Activated B cell treated with CpG ODN at 0.5 μM for 24 hours (primary cell): ENCODE measurements at regions of chr6 and their contacts with region 1.

Region 1: GRCh38 chr6:118709859-118710350 is 58.5 kb upstream of the CEP85L start:
- DNase-seq: no peak
- ATAC-seq: peak; percentile 92
- H3K4me3 Mint-ChIP-seq: peak overlapping the region; percentile 95
- H3K27ac Mint-ChIP-seq: peak overlapping the region; percentile 98
- H3K4me1 Mint-ChIP-seq: peaks cover 62% of the 10 kb centered on the region
- H3K27me3 Mint-ChIP-seq: no peaks in the 10 kb centered on the region
- CTCF ChIP-seq: no peak

Region 2: GRCh38 chr6:118551063-118552053 is 158.5 kb before region 1 on chr6:
- CTCF ChIA-PET with region 1: no interaction called
- POLR2A ChIA-PET with region 1: no interaction called
- intact Hi-C with region 1: no loop called
- DNase-seq: no peak
- ATAC-seq: peak; percentile 57
- H3K4me3 Mint-ChIP-seq: no peak overlapping the region
- H3K27ac Mint-ChIP-seq: no peak overlapping the region
- H3K4me1 Mint-ChIP-seq: no peaks in the 10 kb centered on the region
- H3K27me3 Mint-ChIP-seq: no peaks in the 10 kb centered on the region
- CTCF ChIP-seq: no peak

Region 3: DNA sequence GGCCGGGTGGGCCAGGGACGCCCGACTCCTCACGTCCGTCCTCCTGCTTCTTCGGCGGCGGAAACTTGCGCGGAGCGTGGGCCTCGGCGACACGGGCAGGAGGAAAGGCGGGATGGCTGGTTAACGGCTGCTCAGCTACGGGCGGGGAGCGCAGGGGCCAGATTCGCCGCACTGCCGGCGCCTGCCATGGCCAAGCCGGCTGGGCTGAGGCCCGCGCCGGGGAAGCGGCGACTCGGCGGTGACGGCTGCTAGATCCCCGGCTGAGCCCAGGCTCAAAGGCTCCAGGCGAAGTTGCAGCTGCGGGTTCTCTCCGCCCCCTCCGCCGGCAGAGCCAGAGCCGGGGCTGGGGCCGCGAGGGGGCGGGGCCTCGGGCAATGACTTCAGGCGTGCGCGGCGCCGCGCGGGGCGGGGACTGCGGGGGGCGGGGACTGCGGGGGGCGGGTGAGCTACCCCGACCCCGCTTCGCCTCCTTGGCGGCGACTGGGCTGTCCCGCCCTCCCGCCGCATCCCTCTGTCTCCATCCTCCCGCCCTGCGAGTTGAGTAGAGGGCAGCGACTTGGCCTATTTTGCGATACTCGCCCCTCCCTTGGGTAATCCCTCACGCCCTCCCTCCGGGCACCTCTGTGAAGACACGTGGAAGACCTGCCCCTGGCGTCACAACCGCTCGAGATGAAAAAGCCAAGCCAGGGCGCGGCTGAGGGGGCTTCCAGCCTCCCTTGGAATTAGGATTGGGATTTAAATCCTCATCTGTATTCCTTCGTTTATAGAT is 58.4 kb before region 1 on chr6 and contains the start of gene CEP85L:
- CTCF ChIA-PET with region 1: interaction called, 3 read pairs
- POLR2A ChIA-PET with region 1: interaction called, 46 read pairs
- intact Hi-C with region 1: loop called (anchors 1 kb)
- DNase-seq: peak; percentile 85
- ATAC-seq: peak; percentile 91
- H3K4me3 Mint-ChIP-seq: peak within 1 kb of the TSS; percentile 98
- H3K27ac Mint-ChIP-seq: peak within 1 kb of the TSS; percentile 93
- H3K4me1 Mint-ChIP-seq: peaks cover 22% of the 10 kb centered on the region
- H3K27me3 Mint-ChIP-seq: no peaks in the 10 kb centered on the region
- CTCF ChIP-seq: no peak
- total RNA-seq, gene CEP85L: 14.6 and 21.8 TPM in 2 replicates

Region 4: GRCh38 chr6:118674775-118675174 is 35.1 kb before region 1 on chr6:
- CTCF ChIA-PET with region 1: no interaction called
- POLR2A ChIA-PET with region 1: interaction called, 10 read pairs
- intact Hi-C with region 1: no loop called
- DNase-seq: no peak
- ATAC-seq: no peak
- H3K4me3 Mint-ChIP-seq: no peak overlapping the region
- H3K27ac Mint-ChIP-seq: no peak overlapping the region
- H3K4me1 Mint-ChIP-seq: peaks cover 17% of the 10 kb centered on the region
- H3K27me3 Mint-ChIP-seq: no peaks in the 10 kb centered on the region
- CTCF ChIP-seq: no peak

Region 5: DNA sequence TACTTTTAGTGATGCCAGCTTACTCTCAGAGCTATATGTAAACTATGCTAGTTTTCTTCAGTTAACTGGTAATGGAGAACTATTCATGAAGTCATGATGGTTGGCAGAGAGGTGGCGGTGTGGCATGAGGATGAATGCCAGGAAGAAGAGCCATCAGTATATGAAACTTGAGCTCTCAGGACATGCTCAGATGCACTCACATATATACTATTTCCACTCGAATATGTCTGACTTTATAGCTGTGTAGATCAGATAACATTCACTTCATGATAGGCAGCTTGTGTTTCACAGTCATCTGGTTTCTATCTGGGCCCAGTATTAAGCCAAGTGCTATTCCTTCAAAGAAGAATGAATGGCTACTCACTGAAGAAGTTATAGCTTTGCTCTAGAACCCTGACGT is 12.4 kb before region 1 on chr6:
- CTCF ChIA-PET with region 1: interaction called, 5 read pairs
- POLR2A ChIA-PET with region 1: interaction called, 9 read pairs
- intact Hi-C with region 1: loop called (anchors 1 kb)
- DNase-seq: no peak
- ATAC-seq: no peak
- H3K4me3 Mint-ChIP-seq: no peak overlapping the region
- H3K27ac Mint-ChIP-seq: no peak overlapping the region
- H3K4me1 Mint-ChIP-seq: peaks cover 55% of the 10 kb centered on the region
- H3K27me3 Mint-ChIP-seq: no peaks in the 10 kb centered on the region
- CTCF ChIP-seq: no peak

Region 6: GRCh38 chr6:118724211-118724610 is 14.3 kb after region 1 on chr6:
- CTCF ChIA-PET with region 1: interaction called, 18 read pairs
- POLR2A ChIA-PET with region 1: interaction called, 58 read pairs
- intact Hi-C with region 1: loop called (anchors 1 kb)
- DNase-seq: no peak
- ATAC-seq: peak; percentile 74
- H3K4me3 Mint-ChIP-seq: peak overlapping the region; percentile 55
- H3K27ac Mint-ChIP-seq: peak overlapping the region; percentile 80
- H3K4me1 Mint-ChIP-seq: peaks cover 64% of the 10 kb centered on the region
- H3K27me3 Mint-ChIP-seq: no peaks in the 10 kb centered on the region
- CTCF ChIP-seq: no peak

Region 7: DNA sequence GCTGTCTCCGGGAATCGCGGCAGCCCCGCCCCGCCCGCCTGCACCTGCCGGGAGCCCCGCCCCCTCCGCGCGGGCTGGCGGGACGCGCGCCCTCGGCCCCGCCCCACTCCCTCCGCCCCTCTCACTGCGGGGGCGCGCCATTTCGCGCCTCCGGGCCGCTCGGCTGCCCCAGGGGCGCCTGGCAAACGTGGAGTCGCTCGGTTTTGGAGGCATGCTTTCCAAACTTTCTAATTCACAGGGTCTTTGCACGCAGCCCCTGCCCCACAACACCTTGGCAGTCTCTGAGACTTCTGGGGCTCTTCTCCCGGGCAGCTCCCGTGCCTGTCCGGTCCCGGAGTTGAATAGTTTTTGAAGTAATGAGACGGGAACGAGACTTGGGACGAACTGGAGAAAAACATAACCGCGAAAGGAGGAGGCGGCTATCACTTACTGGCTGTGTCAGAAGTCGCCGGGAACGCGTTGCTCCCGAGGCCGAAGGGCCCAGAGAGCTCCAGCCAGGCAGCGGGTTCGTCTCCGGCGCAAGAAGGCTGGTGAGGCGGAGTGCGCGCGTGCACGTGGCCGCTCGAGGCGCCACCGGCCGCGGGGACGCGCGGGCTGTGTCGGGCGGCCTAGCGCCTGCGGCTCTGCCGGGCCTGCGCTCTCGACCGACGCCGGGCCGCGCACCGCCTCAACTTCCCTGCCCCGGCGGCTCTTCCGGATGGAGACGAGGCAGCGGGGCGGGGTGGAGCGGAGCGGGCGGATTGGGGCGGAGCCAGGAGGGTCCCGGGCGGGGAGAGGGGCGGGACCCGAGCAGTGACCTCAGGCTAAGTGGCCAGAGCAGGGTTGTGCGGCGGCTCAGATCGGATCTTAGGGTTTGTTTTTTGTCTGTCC is 224.8 kb after region 1 on chr6 and contains the start of gene MCM9:
- CTCF ChIA-PET with region 1: no interaction called
- POLR2A ChIA-PET with region 1: no interaction called
- intact Hi-C with region 1: loop called (anchors 5 kb)
- DNase-seq: peak; percentile 90
- ATAC-seq: peak; percentile 92
- H3K4me3 Mint-ChIP-seq: peak within 1 kb of the TSS; percentile 89
- H3K27ac Mint-ChIP-seq: peak within 1 kb of the TSS; percentile 91
- H3K4me1 Mint-ChIP-seq: peaks cover 32% of the 10 kb centered on the region
- H3K27me3 Mint-ChIP-seq: no peaks in the 10 kb centered on the region
- CTCF ChIP-seq: no peak
- total RNA-seq, gene MCM9: 33.3 and 37.0 TPM in 2 replicates

Region 8: DNA sequence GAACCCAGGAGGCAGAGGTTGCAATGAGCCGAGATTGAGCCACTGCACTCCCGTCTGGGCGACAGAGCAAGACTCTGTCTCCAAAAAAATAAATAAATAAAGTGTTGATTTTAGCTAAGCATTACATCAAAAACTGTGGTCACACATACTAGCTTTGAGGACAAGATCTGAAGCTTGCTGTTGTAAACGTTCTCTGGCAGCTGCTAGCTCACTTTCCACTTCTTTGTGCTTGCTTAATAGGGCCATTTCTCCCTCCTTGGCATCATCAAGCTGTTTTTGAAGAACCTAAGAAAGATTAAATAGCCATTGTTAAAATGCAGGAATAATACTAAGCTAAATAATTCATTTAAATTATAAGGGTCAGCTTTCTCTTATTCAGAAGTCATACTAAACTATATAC is 312.9 kb after region 1 on chr6:
- CTCF ChIA-PET with region 1: no interaction called
- POLR2A ChIA-PET with region 1: no interaction called
- intact Hi-C with region 1: no loop called
- DNase-seq: no peak
- ATAC-seq: no peak
- H3K4me3 Mint-ChIP-seq: no peak overlapping the region
- H3K27ac Mint-ChIP-seq: no peak overlapping the region
- H3K4me1 Mint-ChIP-seq: no peaks in the 10 kb centered on the region
- H3K27me3 Mint-ChIP-seq: no peaks in the 10 kb centered on the region
- CTCF ChIP-seq: no peak